ENCODE measurements at regions of chr9 and their contacts with region 1.

Region 1: DNA sequence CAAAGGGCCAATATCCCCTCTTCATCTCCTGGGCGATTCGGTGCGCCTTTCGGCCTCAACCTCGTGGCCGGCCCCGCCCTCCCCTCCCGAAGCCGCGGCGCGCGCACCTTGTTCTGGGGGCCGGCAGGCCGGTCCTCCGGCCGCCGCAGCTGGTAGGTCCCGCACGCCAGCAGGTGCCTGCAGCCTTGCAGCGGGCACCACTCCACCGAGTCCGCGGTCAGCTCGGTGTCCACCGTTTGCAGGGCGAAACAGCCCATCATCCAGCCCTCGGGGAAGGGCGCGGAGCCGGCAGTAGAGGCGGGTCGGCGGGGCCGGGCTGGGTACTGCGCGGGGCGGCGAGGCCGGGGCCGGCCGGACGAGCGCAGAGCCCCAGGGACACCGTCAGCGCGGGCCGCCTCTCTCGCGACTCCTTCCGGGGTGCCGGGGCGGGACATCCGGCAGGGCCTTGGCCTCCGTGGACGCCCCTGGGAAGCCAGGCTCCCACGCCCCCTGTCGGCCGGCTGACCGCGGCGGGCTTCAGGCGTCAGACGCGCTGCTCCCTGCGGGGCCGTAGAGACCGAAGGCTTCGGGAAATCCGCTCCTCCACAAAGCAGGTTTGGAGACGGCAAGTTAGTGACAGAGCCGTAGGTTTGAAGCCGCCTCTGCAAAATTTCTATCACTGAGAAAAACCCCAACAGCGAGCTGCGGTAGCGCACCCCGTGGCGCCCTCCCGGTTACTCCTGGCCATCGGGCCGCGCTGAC is at the start of gene DPH7:
- DNase-seq: peak; percentile 94
- H3K4me3 ChIP-seq: peak within 1 kb of the TSS; percentile 97
- H3K27ac ChIP-seq: peak within 1 kb of the TSS; percentile 84
- H3K4me1 ChIP-seq: peaks cover 40% of the 10 kb centered on the region
- CTCF ChIP-seq: peak; percentile 89
- total RNA-seq, gene DPH7: 71.7 and 72.9 TPM in 2 replicates

Region 2: DNA sequence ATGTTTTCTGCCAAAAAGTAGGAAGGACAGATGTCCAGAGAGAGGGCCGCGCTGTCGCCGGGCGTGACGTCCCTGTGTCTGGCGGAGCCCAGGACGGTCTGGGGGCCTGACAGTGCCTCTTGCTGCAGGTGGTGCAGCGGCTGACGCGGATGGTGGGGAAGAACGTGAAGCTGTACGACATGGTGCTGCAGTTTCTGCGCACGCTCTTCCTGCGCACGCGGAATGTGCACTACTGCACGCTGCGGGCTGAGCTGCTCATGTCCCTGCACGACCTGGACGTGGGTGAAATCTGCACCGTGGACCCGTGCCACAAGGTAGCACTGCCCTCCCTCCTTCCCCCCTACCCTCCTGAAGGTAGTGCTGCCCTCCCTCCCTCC is 315.8 kb before region 1 on chr9:
- CTCF ChIA-PET with region 1: no interaction called
- POLR2A ChIA-PET with region 1: no interaction called
- intact Hi-C with region 1: no loop called
- DNase-seq: no peak
- H3K4me3 ChIP-seq: no peak overlapping the region
- H3K27ac ChIP-seq: no peak overlapping the region
- H3K4me1 ChIP-seq: peaks cover 27% of the 10 kb centered on the region
- CTCF ChIP-seq: no peak

Region 3: DNA sequence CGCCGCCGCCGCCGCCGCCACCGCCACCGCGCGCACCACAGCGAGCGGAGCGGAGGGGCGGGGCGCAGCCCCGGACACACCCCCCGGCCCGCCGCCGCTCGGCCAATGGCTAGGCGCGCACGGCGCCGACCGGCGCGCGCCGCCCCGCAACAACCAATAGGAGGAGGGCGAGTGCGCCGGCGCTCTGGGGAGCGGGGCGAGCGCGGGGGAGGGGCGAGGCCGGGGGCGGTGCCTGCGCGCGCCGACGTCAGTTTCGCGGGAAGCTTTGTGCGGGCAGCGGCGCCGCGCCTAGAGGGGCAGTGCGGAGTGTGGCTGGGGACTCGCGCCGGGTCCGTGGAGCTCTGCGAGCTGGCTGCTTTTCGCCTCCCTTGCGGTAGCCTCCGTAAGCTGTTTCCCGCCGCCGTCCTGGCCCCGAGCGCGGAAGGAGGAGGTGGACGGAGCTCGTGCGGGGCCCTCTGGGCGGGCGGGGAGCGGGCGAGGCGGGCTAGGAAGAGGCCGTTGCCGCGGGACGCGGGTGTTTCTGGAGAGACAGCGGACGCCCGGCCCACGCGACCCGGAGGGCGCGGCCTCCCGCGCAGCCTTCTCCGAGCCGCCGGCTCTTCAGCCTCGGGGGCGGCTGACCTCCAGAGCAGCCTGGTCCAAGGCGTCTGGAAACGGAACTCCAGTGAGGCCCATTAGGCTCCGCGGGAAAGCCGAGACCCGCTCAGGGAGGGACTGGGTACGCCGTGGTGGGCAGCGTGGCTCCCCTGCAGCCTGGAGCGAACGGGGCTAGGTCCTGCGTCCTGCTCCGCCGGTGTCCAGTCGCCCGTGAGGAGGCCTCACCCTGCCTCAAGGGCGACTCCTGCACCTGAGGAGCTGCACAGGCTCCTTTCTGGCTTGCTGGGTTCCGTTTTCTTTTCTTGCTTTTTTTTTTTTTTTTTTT is 12.0 kb after region 1 on chr9 and contains the start of gene ZMYND19:
- CTCF ChIA-PET with region 1: no interaction called
- POLR2A ChIA-PET with region 1: interaction called, 5 read pairs
- intact Hi-C with region 1: loop called (anchors 2 kb)
- DNase-seq: peak; percentile 93
- H3K4me3 ChIP-seq: peak within 1 kb of the TSS; percentile 96
- H3K27ac ChIP-seq: peak within 1 kb of the TSS; percentile 29
- H3K4me1 ChIP-seq: peaks cover 13% of the 10 kb centered on the region
- CTCF ChIP-seq: no peak
- total RNA-seq, gene ZMYND19: 48.4 and 48.5 TPM in 2 replicates

Region 4: DNA sequence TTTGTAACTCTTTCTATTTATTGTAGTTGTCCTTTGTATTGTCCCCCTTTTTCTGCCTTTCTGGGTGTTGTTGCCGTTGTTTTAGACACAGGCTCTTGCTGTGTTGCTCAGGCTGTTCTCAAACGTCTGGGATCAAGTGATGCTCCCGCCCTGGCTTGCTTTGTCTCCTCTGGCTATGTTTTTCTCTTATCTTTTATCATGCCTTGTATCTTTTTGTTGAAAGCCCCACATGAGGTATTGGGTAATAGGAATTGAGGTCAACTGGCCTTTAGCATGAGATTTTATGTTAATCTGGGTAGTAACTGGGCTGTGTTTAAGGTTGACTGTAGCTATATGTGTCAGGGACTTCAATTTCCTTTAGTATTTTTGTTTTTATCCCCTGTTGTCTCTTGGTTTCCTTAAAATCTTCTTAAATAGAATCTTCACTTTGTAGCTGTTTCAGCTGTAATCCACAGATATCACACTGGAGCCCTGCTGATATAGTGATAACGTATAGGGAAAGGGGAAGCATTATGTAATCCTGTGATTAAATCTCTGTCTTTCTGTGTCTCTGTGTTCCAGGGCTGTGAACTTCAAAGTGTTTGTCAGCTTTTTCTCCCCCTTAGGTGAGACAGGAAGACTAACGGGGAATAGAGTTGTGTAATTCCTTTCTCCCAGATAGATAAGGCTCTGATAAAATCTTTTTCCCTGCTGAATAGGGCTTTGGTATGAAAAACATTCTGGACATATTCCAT is 273.0 kb after region 1 on chr9:
- CTCF ChIA-PET with region 1: no interaction called
- POLR2A ChIA-PET with region 1: no interaction called
- intact Hi-C with region 1: no loop called
- DNase-seq: no peak
- H3K4me3 ChIP-seq: no peak overlapping the region
- H3K27ac ChIP-seq: no peak overlapping the region
- H3K4me1 ChIP-seq: no peaks in the 10 kb centered on the region
- CTCF ChIP-seq: no peak

Measured in OCI-LY7 (cell line).